Gastrocnemius medialis (tissue), 4 donors: ENCODE measurements at regions of chr16 and their contacts with region 1.

Region 1: GRCh38 chr16:90022209-90023064 is 3.2 kb upstream of the DBNDD1 start:
- DNase-seq: peak; percentile 78 to 80
- ATAC-seq: peak; percentile 71 to 77
- H3K4me3 ChIP-seq: peak overlapping the region; percentile 82 to 94 (median 88)
- H3K27ac ChIP-seq: peak overlapping the region; percentile 59 to 92 (median 77)
- H3K4me1 ChIP-seq: peaks cover 30 to 46% of the 10 kb centered on the region in 2 donors
- H3K27me3 ChIP-seq: no peaks in the 10 kb centered on the region
- CTCF ChIP-seq: peak in 1 of 5 experiments; percentile 15
- POLR2A ChIP-seq: no peak

Region 2: DNA sequence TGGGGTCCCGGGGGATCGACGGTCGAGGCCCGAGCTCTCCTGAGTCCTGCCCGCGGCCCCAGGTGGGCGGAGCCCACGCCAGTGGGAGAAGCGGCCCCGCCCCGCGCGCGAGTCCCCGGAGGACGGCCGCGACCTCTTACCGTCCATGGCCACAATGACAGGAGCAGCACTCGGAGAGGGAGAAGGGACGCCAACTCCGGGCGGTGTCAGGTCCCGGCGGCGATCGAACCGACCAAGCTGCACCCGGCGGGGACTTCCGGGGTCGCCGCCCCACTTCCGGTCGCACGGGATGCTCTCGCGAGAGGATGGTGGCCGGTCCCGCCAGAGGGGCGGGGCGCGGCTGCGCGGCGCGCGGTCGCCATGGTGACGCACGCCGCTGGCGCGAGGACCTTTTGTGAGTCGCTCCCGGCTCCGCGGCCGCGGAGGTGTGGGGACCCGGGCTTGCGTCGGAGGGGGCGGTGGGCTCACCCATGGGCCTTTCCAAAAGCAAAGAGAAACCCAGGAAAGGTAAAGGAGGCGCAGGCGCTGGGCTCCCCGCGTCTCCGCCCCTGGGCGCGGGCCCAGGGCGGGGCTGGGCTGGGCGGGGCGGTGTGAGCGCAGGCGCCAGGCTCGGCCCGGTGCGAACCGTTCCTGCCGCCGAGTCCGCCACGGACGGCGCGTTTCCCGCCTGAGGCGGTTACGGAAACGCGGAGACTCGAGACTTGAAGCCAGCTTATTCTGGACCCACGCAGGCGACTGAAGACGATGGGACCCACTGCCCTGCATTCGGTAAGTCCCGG is 364.8 kb before region 1 on chr16 and contains the starts of genes CHMP1A and SPATA33:
- in situ Hi-C with region 1: no loop called
- intact Hi-C with region 1: no loop called
- DNase-seq: peak; percentile 70 to 84
- ATAC-seq: peak; percentile 98
- H3K4me3 ChIP-seq: peak within 1 kb of the TSS; percentile 96 to 100 (median 99)
- H3K27ac ChIP-seq: peak within 1 kb of the TSS; percentile 86 to 91 (median 89)
- H3K4me1 ChIP-seq: peaks cover 18 to 19% of the 10 kb centered on the region in 2 donors
- H3K27me3 ChIP-seq: no peaks in the 10 kb centered on the region
- CTCF ChIP-seq: no peak
- POLR2A ChIP-seq: peak; percentile 54 to 78
- total RNA-seq, gene CHMP1A: 53.4 to 105 (median 78.8) TPM
- total RNA-seq, gene SPATA33: 1.2 to 2.7 (median 2.1) TPM

Region 3: GRCh38 chr16:89720813-89721545 is 301.5 kb before region 1 on chr16 and contains the starts of genes VPS9D1 and ZNF276:
- in situ Hi-C with region 1: no loop called
- intact Hi-C with region 1: no loop called
- DNase-seq: peak; percentile 54 to 58
- ATAC-seq: peak; percentile 81
- H3K4me3 ChIP-seq: peak within 1 kb of the TSS; percentile 67 to 92 (median 81)
- H3K27ac ChIP-seq: peak within 1 kb of the TSS; percentile 85 to 99 (median 95)
- H3K4me1 ChIP-seq: peaks cover 27 to 33% of the 10 kb centered on the region in 2 donors
- H3K27me3 ChIP-seq: no peaks in the 10 kb centered on the region
- CTCF ChIP-seq: peak in 1 of 5 experiments; percentile 17
- POLR2A ChIP-seq: peak; percentile 69 to 72
- total RNA-seq, gene VPS9D1: 2.3 to 9.4 (median 3.4) TPM
- total RNA-seq, gene ZNF276: 11.1 to 13.6 (median 11.5) TPM

Region 4: DNA sequence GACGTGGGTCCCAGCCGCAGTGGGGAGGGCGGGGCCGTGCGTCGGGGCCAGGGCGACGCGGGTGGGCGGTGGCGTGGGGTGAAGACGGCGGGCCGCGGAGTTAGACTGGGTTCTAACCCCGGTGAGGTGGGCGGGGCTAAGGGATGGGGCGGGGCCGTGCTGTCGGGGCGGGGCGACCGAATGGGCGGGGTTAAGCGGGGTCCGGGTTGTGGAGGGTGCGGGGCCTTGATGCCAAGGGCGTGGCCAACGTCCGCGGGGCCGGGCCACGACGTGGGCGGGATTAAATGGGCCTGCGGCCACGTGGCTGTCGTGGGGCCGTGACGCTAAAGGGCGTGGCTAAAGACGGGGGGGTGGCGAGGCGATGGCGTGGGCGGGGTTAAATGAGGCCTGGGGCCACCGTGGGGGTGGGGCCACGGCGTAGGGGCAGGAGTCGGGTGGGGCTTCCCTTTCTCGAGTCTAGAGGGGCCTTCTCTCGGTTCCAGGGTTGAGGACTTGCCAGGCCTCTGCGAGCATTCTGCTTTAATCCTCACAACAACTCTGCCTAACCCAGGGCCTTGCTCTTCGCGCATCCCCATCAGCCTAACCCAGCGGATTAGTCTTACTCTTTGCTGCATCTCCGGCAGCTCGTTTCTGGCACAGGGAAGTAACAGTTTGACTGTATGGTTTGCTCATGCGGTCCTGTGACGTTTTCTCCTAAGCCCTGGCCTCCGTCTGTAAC is 148.3 kb before region 1 on chr16:
- in situ Hi-C with region 1: no loop called
- intact Hi-C with region 1: loop called (anchors 2 kb)
- DNase-seq: peak; percentile 92 to 94
- ATAC-seq: peak; percentile 74 to 79
- H3K4me3 ChIP-seq: peak overlapping the region; percentile 94 to 99 (median 96)
- H3K27ac ChIP-seq: peak overlapping the region; percentile 99 to 100 (median 100)
- H3K4me1 ChIP-seq: peaks cover 10 to 14% of the 10 kb centered on the region in 2 donors
- H3K27me3 ChIP-seq: no peaks in the 10 kb centered on the region
- CTCF ChIP-seq: no peak
- POLR2A ChIP-seq: no peak

Region 5: DNA sequence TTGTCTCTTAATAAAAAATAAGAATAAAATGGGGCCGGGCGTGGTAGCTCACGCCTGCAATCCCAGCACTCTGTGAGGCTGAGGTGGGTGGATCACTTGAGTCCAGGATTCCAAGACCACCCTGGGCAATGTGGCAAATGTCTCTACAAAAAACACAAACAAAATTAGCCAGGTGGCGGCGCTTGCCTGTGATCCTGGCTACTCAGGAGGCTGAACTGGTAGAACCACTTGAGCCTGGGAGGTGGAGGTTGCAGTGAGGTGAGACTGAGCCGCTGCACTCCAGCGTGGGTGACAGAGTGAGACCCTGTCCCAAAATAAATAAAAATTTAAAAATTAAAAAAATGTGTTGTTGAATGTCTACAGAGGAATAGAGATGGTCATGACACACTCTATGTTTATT is 76.8 kb before region 1 on chr16:
- in situ Hi-C with region 1: no loop called
- intact Hi-C with region 1: loop called (anchors 2 kb)
- DNase-seq: no peak
- ATAC-seq: no peak
- H3K4me3 ChIP-seq: no peak overlapping the region
- H3K27ac ChIP-seq: no peak overlapping the region
- H3K4me1 ChIP-seq: peaks cover 9 to 12% of the 10 kb centered on the region in 2 donors
- H3K27me3 ChIP-seq: peaks cover 0 to 2% (median 0%) of the 10 kb centered on the region in 3 donors
- CTCF ChIP-seq: no peak
- POLR2A ChIP-seq: no peak

Region 6: DNA sequence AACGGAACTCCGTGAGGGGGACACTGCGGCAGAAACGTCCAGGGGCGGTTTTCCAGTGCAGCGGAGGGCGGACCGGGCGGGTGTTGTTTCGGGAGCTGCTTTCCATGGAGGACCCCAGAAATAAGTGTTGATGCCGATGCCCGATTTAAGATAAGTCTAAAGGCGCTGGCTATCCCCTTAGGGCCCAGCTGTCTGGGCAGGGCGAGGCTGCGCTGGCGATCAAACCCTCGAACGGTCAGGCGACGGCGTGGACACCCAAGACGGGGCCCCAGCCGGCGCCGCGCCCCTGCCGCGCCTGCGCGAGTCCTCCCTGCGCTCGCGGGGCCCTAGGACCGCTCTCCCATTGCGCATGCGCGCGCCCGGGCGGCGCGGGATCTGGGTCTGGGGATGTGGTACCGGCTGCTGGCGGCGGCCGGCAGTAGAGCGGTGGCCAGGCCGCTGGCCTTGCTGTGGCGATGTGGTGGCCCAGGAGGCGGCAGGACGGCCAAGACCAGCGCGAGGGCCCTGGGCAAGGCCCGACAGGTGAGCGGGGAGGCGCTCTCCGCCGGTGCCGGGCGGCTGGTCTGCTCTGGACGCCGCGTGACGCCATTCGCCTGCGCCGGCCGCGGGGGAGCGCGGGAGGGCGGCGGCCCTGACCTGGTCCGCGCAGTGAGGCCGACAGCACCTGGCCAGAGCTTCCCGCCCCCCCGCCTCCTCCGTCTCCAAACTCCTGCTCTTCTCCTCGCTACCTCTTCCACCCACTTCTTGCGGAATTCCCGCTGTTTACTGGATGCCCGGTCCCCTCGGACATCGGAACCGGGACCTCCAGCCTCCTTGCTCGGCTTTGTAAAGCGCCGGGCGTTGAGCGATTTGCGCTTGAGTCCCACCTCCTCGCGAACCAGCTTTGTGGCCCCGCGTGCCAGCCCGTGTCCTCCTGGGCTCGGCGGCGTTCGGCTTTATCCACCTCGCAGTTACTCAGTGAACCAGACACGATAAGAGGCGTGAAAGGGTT is 49.9 kb before region 1 on chr16:
- in situ Hi-C with region 1: no loop called
- intact Hi-C with region 1: loop called (anchors 2 kb)
- DNase-seq: peak; percentile 79 to 86
- ATAC-seq: peak; percentile 96 to 98
- H3K4me3 ChIP-seq: peak overlapping the region; percentile 84 to 100 (median 94)
- H3K27ac ChIP-seq: peak overlapping the region; percentile 78 to 99 (median 98)
- H3K4me1 ChIP-seq: peaks cover 28 to 40% of the 10 kb centered on the region in 2 donors
- H3K27me3 ChIP-seq: no peaks in the 10 kb centered on the region
- CTCF ChIP-seq: peak in 2 of 5 experiments; percentile 29 to 33
- POLR2A ChIP-seq: peak; percentile 89 to 94

Region 7: DNA sequence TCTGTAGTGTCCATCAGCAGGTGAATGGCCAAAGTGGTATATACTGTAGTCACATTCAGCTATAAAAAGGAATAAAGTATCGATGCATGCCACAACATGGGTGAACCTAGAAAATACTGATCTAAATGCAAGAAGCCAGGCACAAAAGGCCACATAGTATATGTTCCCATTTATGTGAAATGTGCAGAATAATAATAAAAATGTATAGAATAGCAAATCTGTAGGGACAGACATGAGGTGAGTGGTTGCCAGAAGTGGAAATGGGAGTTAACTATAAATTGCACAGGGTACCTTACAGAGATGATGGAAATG is 26.3 kb before region 1 on chr16:
- in situ Hi-C with region 1: no loop called
- intact Hi-C with region 1: loop called (anchors 2 kb)
- DNase-seq: no peak
- ATAC-seq: no peak
- H3K4me3 ChIP-seq: no peak overlapping the region
- H3K27ac ChIP-seq: peak overlapping the region; percentile 82 to 96 (median 93)
- H3K4me1 ChIP-seq: no peaks in the 10 kb centered on the region
- H3K27me3 ChIP-seq: no peaks in the 10 kb centered on the region
- CTCF ChIP-seq: no peak
- POLR2A ChIP-seq: no peak